CD4-positive, alpha-beta T cell (primary cell): ENCODE measurements at regions of chr19 and their contacts with region 1.

Region 1: DNA sequence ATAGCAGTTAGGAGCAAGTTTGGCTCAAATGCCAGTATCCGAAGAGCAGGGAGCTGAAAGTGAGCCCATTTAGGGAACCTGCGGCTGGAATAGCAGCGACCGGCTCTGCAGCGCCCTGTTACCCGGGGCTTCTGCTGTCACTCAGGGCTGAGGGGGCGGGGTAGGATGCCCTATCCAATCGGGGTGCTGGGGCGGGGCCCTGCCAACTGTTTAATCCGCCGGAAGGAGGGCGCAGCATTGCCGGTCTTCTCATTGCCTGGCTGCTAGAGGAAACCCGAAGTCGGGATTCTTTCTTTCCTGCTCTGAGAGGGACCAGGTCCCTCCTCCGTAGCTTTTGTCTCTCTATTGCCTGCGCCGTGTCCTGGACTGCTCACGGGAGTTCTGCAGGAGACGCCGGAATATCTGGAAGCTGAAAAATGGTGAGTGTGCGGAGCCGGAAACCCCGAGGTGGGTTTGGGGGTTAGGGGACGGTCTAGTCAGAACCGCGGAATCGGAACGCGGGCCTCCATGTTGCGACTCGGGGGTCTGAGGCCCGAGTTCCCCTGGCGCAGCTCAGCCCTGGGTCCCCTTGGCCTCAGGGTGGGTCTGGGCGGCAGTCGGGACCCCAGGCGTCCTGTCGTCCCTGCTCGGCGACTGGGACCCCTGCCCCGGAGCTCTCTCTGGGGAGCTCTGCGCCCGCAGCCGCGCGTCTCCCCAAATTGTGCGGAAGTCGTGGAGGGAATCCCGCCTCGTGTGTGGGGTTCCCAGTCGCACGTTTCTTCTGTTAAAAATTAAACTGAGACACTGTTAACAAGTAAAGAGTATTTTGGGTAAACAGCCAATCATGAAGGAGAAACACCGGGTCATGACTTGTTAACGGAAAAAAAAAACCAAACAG is 22.8 kb downstream of the ZNF763 start:
- DNase-seq: peak; percentile 82 to 95 (median 90)
- ATAC-seq: peak; percentile 91
- H3K4me3 ChIP-seq: peak overlapping the region; percentile 100
- H3K4me3 Mint-ChIP-seq: peak overlapping the region; percentile 88
- H3K27ac ChIP-seq: peak overlapping the region; percentile 86 to 91
- H3K27ac Mint-ChIP-seq: peak overlapping the region; percentile 92
- H3K4me1 ChIP-seq: peaks cover 21% of the 10 kb centered on the region
- H3K4me1 Mint-ChIP-seq: peaks cover 34% of the 10 kb centered on the region
- H3K27me3 ChIP-seq: peaks cover 0 to 2% of the 10 kb centered on the region in 2 experiments
- H3K27me3 Mint-ChIP-seq: no peaks in the 10 kb centered on the region
- CTCF ChIP-seq: no peak

Region 2: GRCh38 chr19:11814029-11814699 is 173.5 kb before region 1 on chr19 and contains the start of gene ZNF440:
- CTCF ChIA-PET with region 1: interaction called, 8 read pairs
- POLR2A ChIA-PET with region 1: no interaction called
- intact Hi-C with region 1: loop called in 1 of 2 experiments (anchors 5 kb)
- DNase-seq: peak; percentile 65 to 89 (median 77)
- ATAC-seq: peak; percentile 95
- H3K4me3 ChIP-seq: peak within 1 kb of the TSS; percentile 97
- H3K4me3 Mint-ChIP-seq: peak within 1 kb of the TSS; percentile 98
- H3K27ac ChIP-seq: peak within 1 kb of the TSS in 1 of 2 donors; percentile 5
- H3K27ac Mint-ChIP-seq: peak within 1 kb of the TSS; percentile 75
- H3K4me1 ChIP-seq: peaks cover 23% of the 10 kb centered on the region
- H3K4me1 Mint-ChIP-seq: peaks cover 33% of the 10 kb centered on the region
- H3K27me3 ChIP-seq: no peaks in the 10 kb centered on the region
- H3K27me3 Mint-ChIP-seq: no peaks in the 10 kb centered on the region
- CTCF ChIP-seq: no peak
- total RNA-seq, gene ZNF440: 5.8 to 6.8 TPM

Region 3: GRCh38 chr19:11881151-11881800 is 106.4 kb before region 1 on chr19:
- CTCF ChIA-PET with region 1: interaction called, 14 read pairs
- POLR2A ChIA-PET with region 1: no interaction called
- intact Hi-C with region 1: loop called (anchors 1 kb)
- DNase-seq: peak; percentile 39 to 82 (median 54)
- ATAC-seq: peak; percentile 60
- H3K4me3 ChIP-seq: no peak overlapping the region
- H3K4me3 Mint-ChIP-seq: no peak overlapping the region
- H3K27ac ChIP-seq: no peak overlapping the region
- H3K27ac Mint-ChIP-seq: no peak overlapping the region
- H3K4me1 ChIP-seq: peaks cover 4% of the 10 kb centered on the region
- H3K4me1 Mint-ChIP-seq: no peaks in the 10 kb centered on the region
- H3K27me3 ChIP-seq: no peaks in the 10 kb centered on the region
- H3K27me3 Mint-ChIP-seq: no peaks in the 10 kb centered on the region
- CTCF ChIP-seq: peak; percentile 74

Region 4: DNA sequence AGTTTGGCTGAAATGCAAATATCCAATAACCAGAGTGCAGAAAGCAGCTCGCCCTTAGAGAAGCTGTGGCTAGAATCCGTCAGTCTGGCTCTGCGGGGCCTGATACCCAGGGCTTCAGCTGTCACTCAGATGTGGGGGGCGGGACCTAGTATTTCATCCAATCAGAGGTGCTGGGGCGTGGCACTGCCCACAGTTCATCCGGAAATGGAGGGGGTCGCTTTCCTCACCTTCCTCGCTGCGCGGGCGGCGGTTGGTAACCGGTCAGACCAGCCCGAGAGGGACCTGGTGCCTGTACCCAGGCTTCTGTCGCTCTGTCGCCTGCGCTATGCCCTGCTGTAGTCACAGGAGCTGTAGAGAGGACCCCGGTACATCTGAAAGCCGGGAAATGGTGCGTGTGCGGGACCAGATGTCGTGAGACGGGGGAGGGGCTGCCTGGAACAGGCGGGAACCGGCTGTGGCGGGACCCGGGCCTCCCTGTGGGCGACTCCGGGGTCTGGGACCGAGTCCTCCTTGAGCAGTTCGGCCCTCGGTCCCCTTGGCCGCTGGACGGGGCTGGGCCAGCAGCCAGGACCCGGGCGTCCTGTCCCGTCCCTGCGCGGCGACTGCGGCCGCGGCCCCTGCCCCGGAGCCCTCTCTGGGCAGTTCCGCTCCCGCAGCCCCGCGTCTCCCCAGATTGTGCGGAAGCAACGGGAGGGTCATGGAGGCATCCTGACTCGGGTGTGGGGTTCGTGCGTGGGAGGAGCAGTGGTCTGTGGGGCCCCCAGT is 62.6 kb before region 1 on chr19 and contains the start of gene ZNF700:
- CTCF ChIA-PET with region 1: interaction called, 79 read pairs
- POLR2A ChIA-PET with region 1: interaction called, 65 read pairs
- intact Hi-C with region 1: loop called (anchors 1 kb)
- DNase-seq: peak; percentile 82 to 94 (median 89)
- ATAC-seq: peak; percentile 86
- H3K4me3 ChIP-seq: peak within 1 kb of the TSS; percentile 96
- H3K4me3 Mint-ChIP-seq: peak within 1 kb of the TSS; percentile 98
- H3K27ac ChIP-seq: peak within 1 kb of the TSS; percentile 88 to 90
- H3K27ac Mint-ChIP-seq: peak within 1 kb of the TSS; percentile 96
- H3K4me1 ChIP-seq: peaks cover 43% of the 10 kb centered on the region
- H3K4me1 Mint-ChIP-seq: peaks cover 42% of the 10 kb centered on the region
- H3K27me3 ChIP-seq: no peaks in the 10 kb centered on the region
- H3K27me3 Mint-ChIP-seq: no peaks in the 10 kb centered on the region
- CTCF ChIP-seq: no peak
- total RNA-seq, gene ZNF700: 13.2 to 14.5 TPM

Region 5: GRCh38 chr19:11942843-11943108 is 44.9 kb before region 1 on chr19:
- CTCF ChIA-PET with region 1: no interaction called
- POLR2A ChIA-PET with region 1: interaction called, 3 read pairs
- intact Hi-C with region 1: loop called in 1 of 2 experiments (anchors 5 kb)
- DNase-seq: peak in 1 of 14 experiments; percentile 10
- ATAC-seq: no peak
- H3K4me3 ChIP-seq: no peak overlapping the region
- H3K4me3 Mint-ChIP-seq: no peak overlapping the region
- H3K27ac ChIP-seq: no peak overlapping the region
- H3K27ac Mint-ChIP-seq: no peak overlapping the region
- H3K4me1 ChIP-seq: no peaks in the 10 kb centered on the region
- H3K4me1 Mint-ChIP-seq: no peaks in the 10 kb centered on the region
- H3K27me3 ChIP-seq: no peaks in the 10 kb centered on the region
- H3K27me3 Mint-ChIP-seq: no peaks in the 10 kb centered on the region
- CTCF ChIP-seq: no peak

Region 6: DNA sequence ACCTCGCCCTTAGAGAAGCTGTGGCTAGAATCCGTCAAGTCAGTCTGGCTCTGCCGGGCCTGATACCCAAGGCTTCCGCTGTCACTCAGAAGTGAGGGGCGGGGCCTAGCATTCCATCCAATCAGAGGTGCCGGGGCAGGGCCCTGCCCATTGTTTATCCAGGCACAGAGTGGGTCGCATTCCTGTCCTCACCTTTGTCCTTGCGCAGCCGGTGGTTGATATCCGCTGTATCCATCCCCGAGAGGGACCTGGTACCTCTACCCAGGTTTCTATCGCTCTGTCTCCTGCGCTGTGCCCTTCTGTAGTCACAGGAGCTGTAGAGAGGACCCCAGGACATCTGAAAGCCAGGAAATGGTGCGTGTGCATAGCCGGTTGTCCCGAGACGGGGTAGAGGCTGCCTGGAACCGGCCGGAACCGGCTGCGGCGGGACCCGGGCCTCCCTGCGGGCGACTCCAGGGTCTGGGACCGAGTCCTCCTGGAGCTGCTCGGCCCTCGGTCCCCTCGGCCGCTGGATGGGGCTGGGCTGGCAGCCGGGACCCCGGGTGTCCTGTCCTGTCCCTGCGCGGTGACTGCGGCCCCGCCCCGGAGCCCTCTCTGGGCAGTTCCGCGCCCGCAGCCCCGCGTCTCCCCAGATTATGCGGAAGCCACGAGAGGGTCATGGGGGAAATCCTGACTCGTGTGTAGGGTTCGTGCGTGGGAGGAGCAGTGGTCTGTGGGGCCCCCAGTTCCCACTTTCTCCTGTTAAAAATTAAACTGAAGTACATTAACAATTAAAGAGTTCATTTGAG is 22.6 kb before region 1 on chr19 and contains the start of gene ZNF763:
- CTCF ChIA-PET with region 1: interaction called, 69 read pairs
- POLR2A ChIA-PET with region 1: interaction called, 61 read pairs
- intact Hi-C with region 1: loop called (anchors 1 kb)
- DNase-seq: peak; percentile 80 to 95 (median 86)
- ATAC-seq: peak; percentile 93
- H3K4me3 ChIP-seq: peak within 1 kb of the TSS; percentile 67
- H3K4me3 Mint-ChIP-seq: peak within 1 kb of the TSS; percentile 95
- H3K27ac ChIP-seq: peak within 1 kb of the TSS; percentile 80 to 83
- H3K27ac Mint-ChIP-seq: peak within 1 kb of the TSS; percentile 88
- H3K4me1 ChIP-seq: peaks cover 28% of the 10 kb centered on the region
- H3K4me1 Mint-ChIP-seq: peaks cover 27% of the 10 kb centered on the region
- H3K27me3 ChIP-seq: no peaks in the 10 kb centered on the region
- H3K27me3 Mint-ChIP-seq: no peaks in the 10 kb centered on the region
- CTCF ChIP-seq: no peak
- total RNA-seq, gene ZNF763: 2.5 to 2.9 TPM